Ascending aorta (tissue), 2 donors: ENCODE measurements at regions of chr12 and their contacts with region 1.

Region 1: DNA sequence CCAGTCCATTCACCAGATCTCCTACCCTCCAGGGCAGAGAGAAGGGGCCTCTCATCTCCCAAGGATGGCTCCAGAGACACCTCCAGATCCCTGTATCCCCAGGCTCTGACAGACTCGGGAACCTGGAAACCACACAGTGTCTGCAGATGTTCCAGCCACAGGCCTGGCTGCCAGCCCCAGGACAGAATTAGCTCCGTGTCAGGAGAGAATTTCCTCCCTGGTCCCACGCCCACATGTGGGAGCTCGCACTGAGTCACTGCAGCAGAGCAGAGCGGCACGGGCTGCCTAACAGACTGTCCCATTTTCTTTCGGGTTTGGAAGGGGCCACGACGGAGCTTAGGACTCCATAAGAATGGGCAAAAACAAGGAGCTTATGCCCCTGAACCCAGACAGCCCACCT is 33.6 kb downstream of the CMKLR1 start:
- DNase-seq: peak; percentile 80 to 96
- H3K4me3 ChIP-seq: peak overlapping the region; percentile 39 to 48
- H3K27ac ChIP-seq: peak overlapping the region; percentile 90 to 91
- H3K4me1 ChIP-seq: peaks cover 31 to 64% of the 10 kb centered on the region in 2 donors
- H3K27me3 ChIP-seq: no peaks in the 10 kb centered on the region
- CTCF ChIP-seq: no peak

Region 2: GRCh38 chr12:107503887-107504885 is 801.3 kb before region 1 on chr12:
- intact Hi-C with region 1: no loop called
- DNase-seq: no peak
- H3K4me3 ChIP-seq: no peak overlapping the region
- H3K27ac ChIP-seq: no peak overlapping the region
- H3K4me1 ChIP-seq: no peaks in the 10 kb centered on the region
- H3K27me3 ChIP-seq: no peaks in the 10 kb centered on the region
- CTCF ChIP-seq: no peak

Region 3: GRCh38 chr12:108342985-108343384 is 37.5 kb after region 1 on chr12:
- intact Hi-C with region 1: loop called (anchors 2 kb)
- DNase-seq: peak in 1 of 2 donors; percentile 77
- H3K4me3 ChIP-seq: no peak overlapping the region
- H3K27ac ChIP-seq: peak overlapping the region; percentile 88 to 96
- H3K4me1 ChIP-seq: peaks cover 12 to 29% of the 10 kb centered on the region in 2 donors
- H3K27me3 ChIP-seq: no peaks in the 10 kb centered on the region
- CTCF ChIP-seq: no peak

Region 4: GRCh38 chr12:108349278-108349688 is 43.8 kb after region 1 on chr12:
- intact Hi-C with region 1: loop called (anchors 1 kb)
- DNase-seq: peak; percentile 16 to 83
- H3K4me3 ChIP-seq: peak overlapping the region in 1 of 2 donors; percentile 5
- H3K27ac ChIP-seq: peak overlapping the region; percentile 77 to 82
- H3K4me1 ChIP-seq: peaks cover 3 to 9% of the 10 kb centered on the region in 2 donors
- H3K27me3 ChIP-seq: no peaks in the 10 kb centered on the region
- CTCF ChIP-seq: no peak

Region 5: GRCh38 chr12:108457006-108457733 is 151.7 kb after region 1 on chr12:
- intact Hi-C with region 1: loop called (anchors 5 kb)
- DNase-seq: no peak
- H3K4me3 ChIP-seq: no peak overlapping the region
- H3K27ac ChIP-seq: no peak overlapping the region
- H3K4me1 ChIP-seq: no peaks in the 10 kb centered on the region
- H3K27me3 ChIP-seq: no peaks in the 10 kb centered on the region
- CTCF ChIP-seq: peak; percentile 47 to 77 (median 66)